ENCODE measurements at regions of chr14 and their contacts with region 1.

Region 1: DNA sequence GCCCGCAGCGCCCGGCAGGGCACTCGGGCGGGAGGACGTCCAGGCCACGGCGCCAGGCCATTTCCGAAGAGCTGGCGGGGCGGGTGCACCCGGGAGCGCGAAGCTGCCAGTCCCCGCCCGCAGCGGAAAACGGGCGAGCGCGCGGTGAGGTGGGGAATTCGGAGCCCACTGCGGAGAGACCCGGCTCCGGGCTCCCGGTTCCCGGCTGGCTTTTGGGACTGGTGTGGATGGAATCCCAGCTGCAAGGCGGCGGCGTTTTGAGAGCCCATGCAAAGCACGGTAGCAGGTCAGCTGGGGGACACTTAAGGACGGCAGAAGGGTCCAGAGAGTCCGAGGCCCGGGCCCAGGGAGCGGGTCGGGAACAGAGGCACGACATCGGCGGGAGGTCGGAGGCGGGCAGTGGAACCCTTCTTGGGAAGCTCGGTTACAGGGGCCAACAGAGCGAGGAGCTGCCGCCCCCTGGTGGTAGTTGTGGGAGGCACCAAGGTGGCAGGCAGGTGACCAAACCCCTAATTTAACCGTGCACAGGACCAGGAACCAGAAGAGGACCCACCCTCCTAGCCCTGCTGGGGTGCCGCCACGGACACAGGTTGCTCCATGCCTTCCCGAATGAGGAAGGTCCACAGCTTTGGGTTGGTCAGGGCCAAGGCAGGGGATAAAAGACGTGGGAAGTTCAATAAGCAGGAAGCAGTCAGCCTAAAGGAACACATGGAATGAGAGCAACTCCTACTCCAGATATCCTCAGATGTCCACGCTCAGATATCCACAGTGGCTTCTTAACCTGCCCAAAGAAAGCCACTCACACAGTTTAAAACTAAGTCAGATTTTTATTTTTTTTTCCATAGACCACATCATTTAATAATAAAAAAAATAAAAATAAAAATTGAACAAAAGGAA is 685 bp upstream of the CDH24 start:
- DNase-seq: peak; percentile 87

Region 2: GRCh38 chr14:22973217-22974032 is 84.6 kb before region 1 on chr14:
- CTCF ChIA-PET with region 1: interaction called, 11 read pairs
- POLR2A ChIA-PET with region 1: interaction called, 17 read pairs
- DNase-seq: peak; percentile 61

Region 3: DNA sequence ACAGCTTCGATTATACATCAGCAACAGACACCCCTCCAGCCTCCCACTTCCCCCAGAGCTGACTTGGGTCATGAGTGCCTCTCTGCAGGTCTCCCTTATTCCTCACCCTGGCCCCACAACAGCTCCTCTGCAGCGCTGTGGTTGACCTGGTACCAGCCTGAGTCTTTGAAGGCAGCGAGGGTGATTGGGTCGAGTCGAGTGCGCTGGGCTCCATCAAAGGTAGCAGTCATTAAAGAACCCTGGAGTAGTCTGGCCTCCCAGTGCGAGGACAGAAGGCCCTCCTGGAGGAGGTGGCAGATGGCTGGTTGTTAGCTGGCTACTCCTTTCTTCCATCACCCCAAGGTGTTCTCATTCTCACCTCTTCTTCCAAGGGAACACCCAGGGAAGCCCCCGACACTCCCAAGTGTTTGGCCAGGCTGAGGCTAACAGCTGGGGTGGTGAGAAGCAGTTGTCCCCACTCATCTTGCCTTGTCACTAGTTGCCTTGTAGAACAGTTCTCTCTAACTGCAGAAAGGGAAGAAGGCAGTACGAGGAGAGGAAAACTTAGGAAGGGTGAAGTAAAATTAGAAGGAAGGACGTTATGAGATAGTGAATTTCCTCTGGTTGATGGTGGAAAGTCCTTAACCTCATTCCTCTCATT is 44.1 kb after region 1 on chr14:
- CTCF ChIA-PET with region 1: no interaction called
- POLR2A ChIA-PET with region 1: no interaction called
- DNase-seq: no peak

Measured in HEK293T (cell line).